ENCODE measurements at regions of chr11 and their contacts with region 1.

Region 1: DNA sequence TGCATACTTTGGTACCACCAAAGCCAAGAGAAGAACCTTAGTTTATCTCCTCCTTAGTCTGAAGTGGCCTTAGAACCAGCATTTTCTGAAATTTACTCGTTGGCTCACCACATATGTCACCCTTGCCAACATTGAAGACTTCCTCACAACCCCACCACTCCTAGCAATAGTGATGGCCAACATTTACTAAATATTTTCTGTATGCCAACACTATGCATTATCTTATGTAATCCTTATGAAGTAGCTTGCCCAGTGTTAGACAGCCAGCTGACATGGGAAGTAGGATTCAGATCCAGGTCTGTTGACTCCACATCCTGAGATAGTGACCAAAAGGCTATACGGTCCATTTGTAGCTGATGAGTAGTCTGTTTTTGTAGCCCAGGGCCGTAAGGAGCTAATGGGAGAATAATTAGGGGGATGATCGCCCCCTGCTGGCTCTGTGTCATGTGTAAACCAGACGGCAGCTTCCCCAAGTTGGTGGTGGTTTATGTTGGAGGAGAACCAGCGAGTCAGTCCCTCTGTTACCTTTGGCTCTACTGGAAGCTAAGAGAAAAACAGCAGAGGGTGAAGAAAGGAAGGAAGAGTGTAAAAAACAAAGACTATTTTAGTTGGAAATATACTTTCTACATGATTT is 120.5 kb upstream of the RASSF10 start:
- DNase-seq: peak; percentile 83 to 95
- H3K4me3 ChIP-seq: no peak overlapping the region
- CTCF ChIP-seq: peak in 1 of 3 donors; percentile 9
- POLR2A ChIP-seq: no peak

Region 2: DNA sequence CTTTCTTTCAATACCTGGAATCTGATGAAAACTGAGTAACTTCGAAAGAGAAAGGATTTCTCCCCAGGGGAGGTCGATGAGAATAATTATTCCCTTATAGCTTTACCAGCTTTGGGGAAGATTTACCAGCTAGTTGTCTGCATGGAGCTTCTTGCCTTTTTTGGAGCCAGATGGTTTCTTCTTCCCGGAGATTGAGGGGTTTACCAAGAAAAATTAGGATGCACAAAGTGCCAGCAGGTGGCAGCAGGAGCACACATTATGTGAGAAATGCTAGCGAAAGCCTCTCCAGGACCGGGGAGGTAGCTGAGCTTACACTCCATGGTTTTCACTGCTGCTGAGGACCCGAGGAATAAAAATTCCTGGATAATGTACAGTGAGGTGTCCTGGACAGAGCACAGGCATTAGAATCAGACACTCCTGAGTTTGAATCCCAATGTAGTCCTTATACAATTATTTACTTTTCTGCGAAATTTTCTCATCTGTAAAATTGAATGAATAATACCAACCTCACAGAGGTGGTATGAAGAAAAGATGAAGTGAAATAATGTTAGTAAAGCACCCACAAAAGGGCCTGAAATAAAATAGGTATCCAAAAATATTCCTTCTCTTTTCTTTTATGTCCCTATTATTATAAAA is 557.3 kb before region 1 on chr11:
- intact Hi-C with region 1: loop called (anchors 5 kb)
- DNase-seq: peak; percentile 71 to 94
- H3K4me3 ChIP-seq: no peak overlapping the region
- CTCF ChIP-seq: peak in 1 of 3 donors; percentile 60
- POLR2A ChIP-seq: no peak

Region 3: DNA sequence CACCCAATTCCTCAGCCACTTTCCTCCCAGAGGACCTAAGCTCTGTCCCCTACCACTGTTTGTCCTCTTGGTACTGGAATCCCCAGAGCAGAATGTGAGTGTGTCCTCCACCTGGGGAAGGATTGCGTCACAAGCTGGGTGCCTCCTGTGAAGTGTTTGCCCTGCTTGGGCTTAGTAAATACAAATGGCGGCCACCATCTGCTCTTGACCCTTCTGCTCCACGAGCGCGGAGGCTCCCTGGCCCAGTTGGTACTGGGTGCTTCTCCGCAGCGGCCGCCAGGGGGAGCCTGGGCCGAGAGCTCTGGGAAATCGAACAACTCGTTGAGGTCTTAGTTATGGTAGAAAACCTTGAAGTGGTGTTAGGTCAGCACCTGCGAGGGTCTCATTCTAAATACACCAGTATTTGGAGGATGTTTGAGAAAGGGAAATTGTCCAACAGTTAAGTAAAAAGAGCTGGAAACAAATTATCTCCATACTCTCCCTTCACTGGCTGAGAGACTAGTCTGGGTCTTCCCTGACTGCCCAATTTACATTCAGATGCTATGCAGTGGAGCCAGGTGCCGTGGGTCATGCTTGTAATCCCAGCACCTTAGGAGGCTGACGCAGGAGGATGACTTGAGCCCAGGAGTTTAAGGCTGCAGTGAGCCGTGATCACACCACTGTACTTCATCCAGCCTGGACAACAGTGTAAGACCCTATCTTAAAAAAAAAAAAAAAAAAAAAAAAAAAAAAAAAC is 289.1 kb before region 1 on chr11:
- intact Hi-C with region 1: loop called (anchors 10 kb)
- DNase-seq: peak in 1 of 2 donors; percentile 87
- H3K4me3 ChIP-seq: no peak overlapping the region
- CTCF ChIP-seq: no peak
- POLR2A ChIP-seq: no peak

Measured in lower leg skin (tissue), 4 donors.